Activated CD8-positive, alpha-beta memory T cell treated with anti-CD3 and anti-CD28 coated beads, Interleukin-2, amount 10 ng/mL, durations not matched to agents 7 days and 5 days (primary cell): ENCODE measurements at regions of chr19 and their contacts with region 1.

Region 1: DNA sequence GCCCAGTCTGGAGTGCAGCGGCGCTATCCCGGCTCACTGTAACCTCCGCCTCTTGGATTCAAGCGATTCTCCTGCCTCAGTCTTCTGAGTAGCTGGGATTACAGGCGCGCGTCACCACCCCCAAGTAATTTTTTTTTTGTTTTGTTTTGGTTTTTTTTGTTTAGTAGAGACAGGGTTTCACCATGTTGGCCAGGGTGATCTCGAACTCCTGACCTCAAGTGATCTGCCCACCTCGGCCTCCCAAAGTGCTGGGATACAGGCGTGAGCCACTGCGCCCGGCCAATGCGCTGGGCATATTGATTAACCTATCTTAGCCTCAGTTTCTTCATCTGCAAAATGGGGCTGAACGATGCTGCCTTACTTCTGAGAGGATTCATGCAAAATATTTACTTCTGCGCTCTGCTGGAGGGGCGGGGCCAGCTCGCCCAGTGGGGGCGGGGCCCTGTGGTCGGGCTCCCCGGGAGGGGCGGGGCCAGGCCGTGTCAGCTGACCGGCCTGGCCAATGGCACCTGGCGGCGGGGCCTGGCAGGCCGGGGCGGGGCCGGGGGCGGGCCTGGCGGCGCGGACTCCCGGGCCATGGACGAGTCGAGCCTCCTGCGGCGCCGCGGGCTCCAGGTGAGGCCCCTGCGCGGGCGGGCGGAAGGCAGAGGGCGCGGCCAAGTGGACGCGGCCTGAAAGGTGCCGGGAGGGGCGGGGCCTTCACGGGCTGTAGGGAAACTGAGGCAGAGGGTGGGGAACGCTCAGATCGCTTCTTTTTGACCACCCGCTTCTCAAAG is at the start of gene MAST3:
- DNase-seq: peak; percentile 95
- ATAC-seq: peak; percentile 98
- H3K4me3 Mint-ChIP-seq: peak within 1 kb of the TSS; percentile 78
- H3K27ac Mint-ChIP-seq: no peak within 1 kb of the TSS
- H3K4me1 Mint-ChIP-seq: peaks cover 37% of the 10 kb centered on the region
- H3K27me3 Mint-ChIP-seq: no peaks in the 10 kb centered on the region
- total RNA-seq, gene MAST3: 25.7 to 34.1 TPM

Region 2: DNA sequence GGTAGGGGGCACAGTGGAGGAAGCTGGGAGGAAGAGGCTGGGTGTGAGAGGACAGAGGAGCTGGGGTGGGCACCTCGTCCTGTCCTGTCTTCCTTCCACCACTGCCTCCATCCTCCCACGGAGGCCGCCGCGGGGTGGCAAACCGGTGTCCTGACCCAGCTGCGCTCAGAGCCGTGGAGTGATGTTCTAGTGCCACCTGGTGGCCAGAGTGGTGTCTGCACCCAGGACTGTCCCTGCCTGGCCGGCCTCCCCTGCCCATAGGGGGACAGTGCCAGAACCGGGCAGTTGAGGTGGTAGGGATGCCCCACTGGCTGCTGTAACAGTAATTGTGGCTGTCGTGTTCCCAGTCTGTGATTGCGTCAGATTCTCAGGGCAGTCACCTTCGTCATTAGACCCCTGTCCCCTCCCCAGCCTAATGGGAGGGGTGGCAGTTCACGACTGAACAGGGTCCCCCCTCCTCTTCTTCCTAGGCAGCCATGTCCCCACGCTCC is 100.5 kb before region 1 on chr19:
- CTCF ChIA-PET with region 1: no interaction called
- DNase-seq: peak; percentile 89
- ATAC-seq: peak; percentile 50
- H3K4me3 Mint-ChIP-seq: no peak overlapping the region
- H3K27ac Mint-ChIP-seq: no peak overlapping the region
- H3K4me1 Mint-ChIP-seq: peaks cover 15% of the 10 kb centered on the region
- H3K27me3 Mint-ChIP-seq: peaks cover 5% of the 10 kb centered on the region

Region 3: GRCh38 chr19:18109733-18110595 is 12.6 kb after region 1 on chr19:
- CTCF ChIA-PET with region 1: interaction called, 67 read pairs
- DNase-seq: peak; percentile 66
- ATAC-seq: peak; percentile 81
- H3K4me3 Mint-ChIP-seq: peak overlapping the region; percentile 71
- H3K27ac Mint-ChIP-seq: no peak overlapping the region
- H3K4me1 Mint-ChIP-seq: peaks cover 22% of the 10 kb centered on the region
- H3K27me3 Mint-ChIP-seq: no peaks in the 10 kb centered on the region